OCI-LY7 (cell line): ENCODE measurements at regions of chr2 and their contacts with region 1.

Region 1: GRCh38 chr2:118380915-118381653 is 292.8 kb downstream of the INSIG2 start:
- DNase-seq: no peak
- H3K4me3 ChIP-seq: no peak overlapping the region
- H3K27ac ChIP-seq: no peak overlapping the region
- H3K4me1 ChIP-seq: no peaks in the 10 kb centered on the region
- CTCF ChIP-seq: no peak

Region 2: DNA sequence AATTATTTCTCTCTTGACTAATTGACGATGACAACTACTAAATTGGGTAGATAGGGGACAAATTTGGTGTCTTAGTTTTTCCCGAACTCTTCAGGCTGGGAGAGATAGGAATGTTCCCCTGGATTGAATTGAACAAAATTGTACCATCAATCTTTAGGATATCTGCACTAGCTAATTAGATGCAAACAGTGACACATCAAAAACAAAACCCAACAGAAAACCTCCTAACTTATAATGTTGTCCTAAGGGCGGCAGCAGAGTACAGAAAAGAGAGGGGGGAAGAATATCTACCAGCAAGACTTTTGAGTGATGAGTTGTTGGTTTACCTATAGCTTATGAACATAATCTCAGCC is 50.1 kb after region 1 on chr2:
- CTCF ChIA-PET with region 1: interaction called, 18 read pairs
- POLR2A ChIA-PET with region 1: no interaction called
- intact Hi-C with region 1: no loop called
- DNase-seq: no peak
- H3K4me3 ChIP-seq: no peak overlapping the region
- H3K27ac ChIP-seq: no peak overlapping the region
- H3K4me1 ChIP-seq: no peaks in the 10 kb centered on the region
- CTCF ChIP-seq: no peak